ENCODE measurements at regions of chr16 and their contacts with region 1.

Region 1: DNA sequence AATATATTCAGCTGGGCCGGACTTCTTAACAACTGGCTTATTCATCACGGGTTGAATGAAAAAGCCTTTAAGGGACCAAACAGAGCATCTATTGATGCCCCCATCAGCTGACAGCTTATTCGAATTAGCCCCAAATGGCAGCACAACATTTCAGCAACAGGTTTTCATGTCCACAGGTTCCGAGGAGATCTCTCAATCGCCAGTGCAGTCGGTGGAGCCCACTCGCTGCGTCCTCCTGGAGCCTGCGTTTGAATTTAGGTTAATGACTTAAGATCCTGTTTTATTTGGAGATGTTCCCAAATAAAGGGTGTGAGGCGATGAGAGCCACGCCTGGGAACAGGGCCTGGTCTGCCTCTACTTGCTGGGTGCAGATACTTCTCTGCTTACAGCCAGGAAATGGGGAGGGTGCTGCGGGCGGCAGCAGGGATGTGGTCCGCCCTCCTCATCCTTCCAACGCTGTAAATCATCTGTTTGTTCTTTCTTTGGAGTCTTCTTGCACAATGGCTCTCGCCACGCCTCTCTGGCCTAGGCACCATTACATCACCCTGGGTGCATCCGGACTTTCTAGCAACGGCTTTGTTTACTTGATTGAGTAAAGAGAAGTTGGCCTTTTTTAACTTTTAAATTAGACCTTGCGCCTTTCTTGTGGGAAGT is 22.6 kb downstream of the NDE1 start:
- DNase-seq: peak; percentile 50 to 94 (median 83)
- ATAC-seq: peak; percentile 90 to 96
- H3K4me3 Mint-ChIP-seq: peak overlapping the region; percentile 58 to 86 (median 75)
- H3K27ac Mint-ChIP-seq: peak overlapping the region; percentile 89 to 99 (median 98)
- H3K4me1 Mint-ChIP-seq: peaks cover 31 to 59% (median 46%) of the 10 kb centered on the region in 4 donors
- H3K27me3 Mint-ChIP-seq: no peaks in the 10 kb centered on the region

Region 2: GRCh38 chr16:15450624-15451023 is 222.0 kb before region 1 on chr16:
- POLR2A ChIA-PET with region 1: no interaction called
- DNase-seq: no peak
- ATAC-seq: no peak
- H3K4me3 Mint-ChIP-seq: no peak overlapping the region
- H3K27ac Mint-ChIP-seq: no peak overlapping the region
- H3K4me1 Mint-ChIP-seq: peaks cover 0 to 2% (median 0%) of the 10 kb centered on the region in 4 donors
- H3K27me3 Mint-ChIP-seq: peaks cover 0 to 7% (median 1%) of the 10 kb centered on the region in 5 donors

Region 3: DNA sequence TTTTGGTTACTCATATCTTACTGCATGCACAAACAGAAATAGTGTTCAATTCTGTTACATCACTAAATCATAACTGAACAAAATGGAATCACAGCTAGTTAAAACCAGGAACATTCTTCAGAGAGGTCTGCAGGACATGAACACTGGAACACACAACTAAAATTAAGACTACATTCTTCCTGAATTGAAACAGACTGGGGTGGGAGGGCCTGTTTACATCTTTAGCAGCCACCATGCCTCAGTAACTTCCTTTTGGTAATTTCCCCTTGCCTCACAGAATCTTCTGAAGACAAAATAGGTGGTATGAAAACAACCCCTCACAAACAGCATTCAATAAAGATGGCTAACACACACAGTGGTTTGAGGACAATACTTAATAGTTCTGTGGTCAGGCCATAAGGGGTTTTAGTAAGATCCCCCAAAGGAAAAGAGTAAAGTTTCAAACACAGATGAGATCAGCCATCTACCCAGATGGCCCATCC is 36.2 kb before region 1 on chr16:
- POLR2A ChIA-PET with region 1: interaction called, 10 read pairs
- DNase-seq: peak in 7 of 10 donors; percentile 29 to 64 (median 40)
- ATAC-seq: peak; percentile 79 to 89
- H3K4me3 Mint-ChIP-seq: peak overlapping the region; percentile 26 to 85 (median 79)
- H3K27ac Mint-ChIP-seq: peak overlapping the region; percentile 93 to 98 (median 96)
- H3K4me1 Mint-ChIP-seq: peaks cover 32 to 90% (median 77%) of the 10 kb centered on the region in 4 donors
- H3K27me3 Mint-ChIP-seq: no peaks in the 10 kb centered on the region

Region 4: DNA sequence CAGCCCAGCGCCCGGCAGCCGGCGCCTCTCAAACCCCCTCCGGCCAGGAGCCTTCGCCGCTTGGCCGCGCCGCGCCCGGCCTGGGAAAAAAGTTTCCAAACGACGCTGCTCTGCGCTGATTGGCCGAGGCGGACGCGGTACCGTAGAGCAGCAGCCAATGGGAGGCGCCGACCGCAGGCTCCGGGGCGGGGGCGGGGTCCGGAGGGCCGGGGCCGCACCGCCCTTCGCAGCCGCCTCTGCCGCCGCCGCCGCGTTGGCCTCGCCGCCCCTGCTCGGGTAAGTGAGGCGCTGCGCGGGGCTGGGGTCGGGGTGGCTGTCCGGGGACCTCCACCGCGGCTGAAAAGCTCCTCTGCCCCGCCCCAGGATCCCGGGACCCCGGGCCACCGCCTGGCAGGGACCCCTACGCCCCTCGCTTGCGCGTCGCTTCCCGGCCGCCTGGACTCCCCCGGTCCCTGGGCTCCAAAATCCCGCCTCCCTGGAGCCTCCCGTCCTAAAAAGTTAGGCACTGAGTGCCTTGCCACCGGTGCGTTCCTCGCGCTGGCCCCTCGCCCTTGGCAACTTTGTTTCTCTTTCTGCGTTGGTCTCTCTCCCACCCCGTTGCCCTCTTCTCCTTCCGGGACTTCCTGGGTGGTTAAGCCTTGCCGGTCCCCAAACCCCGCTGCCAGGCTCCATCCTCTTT is 22.5 kb before region 1 on chr16 and contains the start of gene NDE1:
- POLR2A ChIA-PET with region 1: interaction called, 12 read pairs
- DNase-seq: peak; percentile 64 to 91 (median 79)
- ATAC-seq: peak; percentile 96
- H3K4me3 Mint-ChIP-seq: peak within 1 kb of the TSS; percentile 98 to 100 (median 99)
- H3K27ac Mint-ChIP-seq: peak within 1 kb of the TSS; percentile 97 to 100 (median 98)
- H3K4me1 Mint-ChIP-seq: peaks cover 10 to 50% (median 39%) of the 10 kb centered on the region in 4 donors
- H3K27me3 Mint-ChIP-seq: peaks cover 0 to 2% (median 0%) of the 10 kb centered on the region in 5 donors
- polyA plus RNA-seq, gene NDE1: 23.5 to 59.1 (median 42.3) TPM

Region 5: GRCh38 chr16:15658149-15658548 is 14.5 kb before region 1 on chr16:
- POLR2A ChIA-PET with region 1: interaction called, 35 read pairs
- DNase-seq: no peak
- ATAC-seq: peak in 1 of 2 donors; percentile 25
- H3K4me3 Mint-ChIP-seq: peak overlapping the region in 4 of 10 donors; percentile 10 to 66 (median 46)
- H3K27ac Mint-ChIP-seq: peak overlapping the region; percentile 81 to 97 (median 94)
- H3K4me1 Mint-ChIP-seq: peaks cover 28 to 83% (median 71%) of the 10 kb centered on the region in 4 donors
- H3K27me3 Mint-ChIP-seq: no peaks in the 10 kb centered on the region